Psoas muscle (tissue), 8 donors: ENCODE measurements at regions of chr1 and their contacts with region 1.

Region 1: DNA sequence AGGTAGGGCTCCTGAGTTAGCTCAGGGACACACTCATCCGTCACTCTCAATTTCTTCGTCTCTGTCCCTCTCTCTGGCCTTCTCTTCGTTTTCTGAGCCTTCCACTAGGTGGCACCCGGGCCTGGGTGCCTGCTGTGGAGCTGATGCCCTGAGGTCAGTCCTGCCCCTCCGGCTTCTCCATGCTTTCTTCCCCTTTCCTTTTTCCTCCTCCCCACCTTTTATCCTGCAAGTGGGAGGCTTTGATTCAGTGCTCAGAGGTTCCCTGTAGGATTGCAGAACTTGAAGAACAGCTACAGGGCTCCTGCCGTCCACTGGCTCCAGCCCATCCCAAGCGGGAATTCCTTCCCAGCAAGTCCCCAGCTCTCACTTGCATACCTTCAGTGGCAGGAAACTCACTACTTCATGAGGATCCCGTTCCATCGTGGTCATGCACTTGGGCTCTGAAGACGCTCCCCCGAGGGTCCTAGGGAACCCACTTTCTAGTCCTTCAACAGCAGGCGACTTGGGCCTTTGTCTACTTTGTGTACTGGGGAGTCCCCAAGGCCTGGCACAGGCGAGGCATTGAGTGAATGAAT is 45.6 kb downstream of the SRRM1 start:
- DNase-seq: peak; percentile 72 to 79
- ATAC-seq: peak; percentile 80 to 93 (median 90)
- H3K4me3 ChIP-seq: no peak overlapping the region
- H3K27ac ChIP-seq: no peak overlapping the region
- H3K4me1 ChIP-seq: no peaks in the 10 kb centered on the region
- H3K27me3 ChIP-seq: no peaks in the 10 kb centered on the region
- CTCF ChIP-seq: peak; percentile 89

Region 2: DNA sequence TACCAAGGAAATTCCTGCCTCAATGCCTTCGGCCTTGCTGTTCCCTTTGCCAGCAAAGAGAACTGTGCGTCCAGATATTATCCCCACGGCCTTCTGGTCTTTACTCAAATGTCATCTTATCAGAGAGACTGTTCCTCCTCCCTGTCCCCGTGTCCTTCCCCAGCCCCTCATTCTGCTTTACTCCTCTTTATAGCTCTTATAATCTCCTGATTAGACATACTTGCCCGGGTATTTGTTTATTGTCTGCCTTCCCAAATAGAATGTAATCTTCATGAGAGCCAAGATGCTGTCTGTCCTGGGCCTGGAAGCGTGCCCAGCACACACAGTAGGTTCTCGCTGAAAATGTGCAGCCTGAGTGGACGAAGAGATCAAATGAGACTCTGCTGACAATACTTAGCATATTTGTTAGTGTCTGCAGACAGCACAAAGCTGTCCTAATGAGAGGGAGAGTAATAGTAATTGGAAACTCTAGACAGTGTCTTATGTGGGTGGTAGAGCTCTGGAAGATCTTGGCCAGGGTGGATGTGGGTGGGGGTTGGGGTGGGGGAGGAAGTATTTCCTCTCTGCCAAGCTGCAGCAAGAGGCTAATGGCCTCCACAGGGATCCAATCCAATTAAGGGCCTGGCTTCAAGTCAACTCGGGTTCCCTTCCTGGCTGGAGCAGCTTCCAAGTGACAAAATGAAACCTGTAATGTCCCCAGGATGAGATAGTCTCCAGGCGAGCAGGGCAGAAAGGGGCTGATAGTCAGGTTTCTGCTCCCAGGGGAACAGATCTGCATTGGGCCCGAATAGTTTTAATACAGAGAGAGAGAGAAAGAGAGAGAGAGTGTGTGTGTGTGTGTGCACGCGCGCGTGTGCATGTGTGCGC is 47.0 kb after region 1 on chr1:
- intact Hi-C with region 1: loop called in 1 of 2 experiments (anchors 5 kb)
- DNase-seq: no peak
- ATAC-seq: peak in 3 of 4 donors; percentile 59 to 69 (median 61)
- H3K4me3 ChIP-seq: peak overlapping the region; percentile 36
- H3K27ac ChIP-seq: peak overlapping the region; percentile 46
- H3K4me1 ChIP-seq: peaks cover 15% of the 10 kb centered on the region
- H3K27me3 ChIP-seq: no peaks in the 10 kb centered on the region
- CTCF ChIP-seq: no peak